Mammary epithelial cell (primary cell): ENCODE measurements at regions of chr15 and their contacts with region 1.

Region 1: DNA sequence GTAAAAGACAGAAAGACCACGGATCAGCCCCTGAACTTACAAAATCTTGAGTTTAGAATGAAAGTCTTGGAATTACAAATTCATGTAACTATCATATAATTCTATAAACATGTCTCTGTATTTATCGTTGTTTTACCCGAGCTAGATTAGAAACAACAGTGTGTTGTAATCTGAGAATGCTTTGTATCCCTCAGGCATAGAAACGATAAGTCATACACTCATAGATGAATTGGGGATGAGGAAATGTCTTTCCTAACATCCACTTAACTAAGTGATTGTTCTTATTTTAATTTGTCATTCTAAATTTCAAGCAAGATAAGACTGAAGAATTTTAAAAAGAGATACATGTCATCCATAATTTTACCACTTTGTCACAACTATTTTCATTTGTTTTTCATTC is 165.3 kb downstream of the RYR3 start:
- DNase-seq: peak; percentile 36
- H3K4me3 ChIP-seq: no peak overlapping the region
- H3K27ac ChIP-seq: no peak overlapping the region
- H3K4me1 ChIP-seq: no peaks in the 10 kb centered on the region
- H3K27me3 ChIP-seq: no peaks in the 10 kb centered on the region
- CTCF ChIP-seq: no peak

Region 2: DNA sequence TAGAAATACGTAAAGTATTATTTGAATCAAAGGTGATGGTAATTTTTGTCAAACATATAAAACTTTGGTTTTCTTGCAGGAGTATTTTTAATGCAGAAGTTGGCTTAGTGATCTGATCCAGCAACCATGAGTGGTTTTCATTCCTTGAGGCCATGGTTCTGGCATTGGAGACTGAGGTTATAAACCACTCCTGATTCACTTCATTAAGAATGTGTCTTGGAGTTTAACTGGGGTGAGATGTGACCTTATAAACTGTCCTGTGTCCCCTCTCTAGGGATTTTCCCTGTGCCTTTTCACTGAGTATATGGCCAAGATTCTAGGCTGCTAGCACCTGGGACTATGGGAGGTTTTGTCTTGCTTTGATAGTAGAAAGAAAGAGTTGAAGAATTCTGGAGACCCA is 71.0 kb before region 1 on chr15:
- CTCF ChIA-PET with region 1: no interaction called
- dilution Hi-C with region 1: no loop called
- in situ Hi-C with region 1: no loop called
- intact Hi-C with region 1: no loop called
- DNase-seq: no peak
- H3K4me3 ChIP-seq: no peak overlapping the region
- H3K27ac ChIP-seq: no peak overlapping the region
- H3K4me1 ChIP-seq: no peaks in the 10 kb centered on the region
- H3K27me3 ChIP-seq: no peaks in the 10 kb centered on the region
- CTCF ChIP-seq: no peak

Region 3: GRCh38 chr15:33419701-33420100 is 56.4 kb before region 1 on chr15:
- CTCF ChIA-PET with region 1: no interaction called
- dilution Hi-C with region 1: no loop called
- in situ Hi-C with region 1: no loop called
- intact Hi-C with region 1: loop called (anchors 2 kb)
- DNase-seq: no peak
- H3K4me3 ChIP-seq: no peak overlapping the region
- H3K27ac ChIP-seq: no peak overlapping the region
- H3K4me1 ChIP-seq: peaks cover 4% of the 10 kb centered on the region
- H3K27me3 ChIP-seq: peaks cover 3% of the 10 kb centered on the region
- CTCF ChIP-seq: no peak

Region 4: DNA sequence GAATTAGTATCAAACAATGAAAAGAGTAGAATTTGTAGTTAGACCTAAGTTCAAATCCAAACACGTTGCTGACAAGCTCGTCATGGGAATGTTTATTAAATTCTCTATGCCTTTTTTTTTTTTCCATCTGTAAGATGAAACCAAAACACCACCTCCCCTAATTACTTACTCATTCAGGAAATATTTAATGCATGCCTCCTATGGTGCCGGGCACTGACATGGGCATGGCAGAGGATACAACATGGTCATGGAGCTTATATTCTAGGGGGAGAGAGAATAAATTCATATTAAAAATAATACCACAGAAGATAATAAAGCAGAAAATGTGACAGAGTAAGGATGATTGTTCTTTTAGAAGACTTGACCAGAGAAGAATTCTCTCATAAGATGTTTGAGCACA is 50.5 kb after region 1 on chr15:
- CTCF ChIA-PET with region 1: no interaction called
- dilution Hi-C with region 1: no loop called
- in situ Hi-C with region 1: no loop called
- intact Hi-C with region 1: no loop called
- DNase-seq: no peak
- H3K4me3 ChIP-seq: no peak overlapping the region
- H3K27ac ChIP-seq: no peak overlapping the region
- H3K4me1 ChIP-seq: no peaks in the 10 kb centered on the region
- H3K27me3 ChIP-seq: no peaks in the 10 kb centered on the region
- CTCF ChIP-seq: no peak

Region 5: DNA sequence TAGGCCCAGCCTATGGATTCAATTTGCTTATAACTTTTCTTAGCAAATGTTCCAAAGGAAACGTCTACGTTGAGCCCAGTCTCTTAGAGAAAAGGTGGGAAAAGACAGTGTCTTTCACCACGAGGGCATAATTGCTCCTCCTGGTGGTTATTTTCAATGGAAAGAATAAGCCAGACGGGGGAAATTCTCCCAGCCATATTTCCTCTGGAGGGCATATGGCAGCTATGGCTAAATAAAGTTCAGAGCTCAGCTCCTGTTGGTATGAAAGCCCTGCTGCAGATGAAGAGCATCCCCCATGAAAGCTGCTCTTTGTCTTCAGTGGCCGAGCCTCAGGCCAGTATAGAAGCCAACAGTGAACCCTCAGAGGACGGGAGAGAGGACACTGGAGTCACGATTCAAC is 132.6 kb after region 1 on chr15:
- CTCF ChIA-PET with region 1: no interaction called
- dilution Hi-C with region 1: no loop called
- in situ Hi-C with region 1: no loop called
- intact Hi-C with region 1: no loop called
- DNase-seq: no peak
- H3K4me3 ChIP-seq: no peak overlapping the region
- H3K27ac ChIP-seq: no peak overlapping the region
- H3K4me1 ChIP-seq: no peaks in the 10 kb centered on the region
- H3K27me3 ChIP-seq: no peaks in the 10 kb centered on the region
- CTCF ChIP-seq: peak; percentile 28 to 45